Colonic mucosa (tissue), 4 donors: ENCODE measurements at regions of chr19 and their contacts with region 1.

Region 1: DNA sequence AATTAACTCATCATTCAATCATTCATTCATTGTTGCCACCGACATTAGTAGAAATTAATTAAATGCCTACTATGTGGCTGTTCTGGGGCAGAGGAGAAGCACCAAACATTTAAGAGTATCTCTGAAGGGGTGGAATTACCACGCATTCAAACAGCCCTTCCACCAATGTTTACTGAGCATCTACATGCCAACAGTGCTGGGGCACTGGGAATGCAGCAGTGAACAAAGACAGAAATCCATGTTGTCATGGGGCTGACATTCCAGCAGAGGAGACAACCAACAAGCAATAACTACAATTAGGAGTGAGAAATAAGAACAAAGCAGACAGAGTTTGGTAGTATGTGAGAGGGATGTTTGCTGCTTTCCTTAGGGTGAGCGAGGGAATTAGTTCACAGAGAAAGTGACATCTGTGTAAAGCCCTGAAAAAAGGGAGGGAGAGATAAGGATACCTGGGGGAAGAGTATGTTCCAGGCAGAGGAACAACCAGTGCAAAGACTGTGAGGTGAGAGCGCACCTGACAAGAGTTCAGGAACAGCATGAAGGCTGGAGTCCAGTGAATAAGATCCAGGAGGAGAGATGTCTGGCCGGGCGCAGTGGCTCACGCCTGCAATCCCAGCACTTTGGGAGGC is 1.3 kb upstream of the PAK4 start:
- DNase-seq: no peak
- H3K4me3 ChIP-seq: no peak overlapping the region
- H3K27ac ChIP-seq: no peak overlapping the region
- H3K4me1 ChIP-seq: peaks cover 15% of the 10 kb centered on the region
- H3K27me3 ChIP-seq: no peaks in the 10 kb centered on the region
- CTCF ChIP-seq: no peak

Region 2: DNA sequence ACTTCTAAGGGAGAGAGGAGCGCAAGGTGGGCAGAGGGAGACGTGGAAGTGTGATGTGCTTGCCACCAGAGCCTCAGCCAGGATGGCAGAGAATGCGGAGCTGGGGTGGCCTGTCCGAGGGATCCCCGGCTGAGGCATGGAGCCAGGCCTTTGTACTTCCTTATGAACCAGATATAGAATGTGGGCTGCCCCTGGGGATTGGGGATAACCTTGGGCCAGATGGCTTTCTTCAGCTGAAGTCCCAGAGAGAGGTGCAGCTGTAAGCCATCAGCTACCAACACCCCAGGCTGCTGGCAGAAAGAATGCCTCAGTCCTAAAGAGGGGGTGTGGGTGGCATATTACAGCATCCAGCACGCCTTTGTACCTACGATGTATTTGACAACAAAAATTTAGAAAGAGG is 123.2 kb before region 1 on chr19:
- intact Hi-C with region 1: no loop called
- DNase-seq: no peak
- H3K4me3 ChIP-seq: no peak overlapping the region
- H3K27ac ChIP-seq: no peak overlapping the region
- H3K4me1 ChIP-seq: no peaks in the 10 kb centered on the region
- H3K27me3 ChIP-seq: no peaks in the 10 kb centered on the region
- CTCF ChIP-seq: no peak

Region 3: GRCh38 chr19:39187559-39187957 is 63.3 kb after region 1 on chr19:
- intact Hi-C with region 1: loop called (anchors 2 kb)
- DNase-seq: no peak
- H3K4me3 ChIP-seq: no peak overlapping the region
- H3K27ac ChIP-seq: no peak overlapping the region
- H3K4me1 ChIP-seq: no peaks in the 10 kb centered on the region
- H3K27me3 ChIP-seq: peaks cover 3% of the 10 kb centered on the region
- CTCF ChIP-seq: no peak

Region 4: GRCh38 chr19:39328046-39328705 is 203.9 kb after region 1 on chr19:
- intact Hi-C with region 1: loop called (anchors 5 kb)
- DNase-seq: peak; percentile 88
- H3K4me3 ChIP-seq: no peak overlapping the region
- H3K27ac ChIP-seq: no peak overlapping the region
- H3K4me1 ChIP-seq: no peaks in the 10 kb centered on the region
- H3K27me3 ChIP-seq: no peaks in the 10 kb centered on the region
- CTCF ChIP-seq: peak; percentile 94